ENCODE measurements at regions of chrX and their contacts with region 1.

Region 1: GRCh38 chrX:1537035-1537715 is at the start of gene P2RY8:
- DNase-seq: peak; percentile 89 to 94 (median 90)
- H3K4me3 ChIP-seq: peak within 1 kb of the TSS; percentile 62 to 99 (median 95)
- H3K4me3 Mint-ChIP-seq: peak within 1 kb of the TSS; percentile 95 to 96
- H3K27ac ChIP-seq: peak within 1 kb of the TSS; percentile 91 to 97
- H3K27ac Mint-ChIP-seq: peak within 1 kb of the TSS; percentile 94 to 100 (median 99)
- H3K4me1 ChIP-seq: peaks cover 18 to 29% of the 10 kb centered on the region in 2 donors
- H3K4me1 Mint-ChIP-seq: peaks cover 17% of the 10 kb centered on the region
- H3K27me3 ChIP-seq: no peaks in the 10 kb centered on the region
- H3K27me3 Mint-ChIP-seq: peaks cover 0 to 2% (median 0%) of the 10 kb centered on the region in 3 donors
- CTCF ChIP-seq: no peak
- polyA plus RNA-seq, gene P2RY8: 18.9 to 40.0 (median 33.3) TPM

Region 2: DNA sequence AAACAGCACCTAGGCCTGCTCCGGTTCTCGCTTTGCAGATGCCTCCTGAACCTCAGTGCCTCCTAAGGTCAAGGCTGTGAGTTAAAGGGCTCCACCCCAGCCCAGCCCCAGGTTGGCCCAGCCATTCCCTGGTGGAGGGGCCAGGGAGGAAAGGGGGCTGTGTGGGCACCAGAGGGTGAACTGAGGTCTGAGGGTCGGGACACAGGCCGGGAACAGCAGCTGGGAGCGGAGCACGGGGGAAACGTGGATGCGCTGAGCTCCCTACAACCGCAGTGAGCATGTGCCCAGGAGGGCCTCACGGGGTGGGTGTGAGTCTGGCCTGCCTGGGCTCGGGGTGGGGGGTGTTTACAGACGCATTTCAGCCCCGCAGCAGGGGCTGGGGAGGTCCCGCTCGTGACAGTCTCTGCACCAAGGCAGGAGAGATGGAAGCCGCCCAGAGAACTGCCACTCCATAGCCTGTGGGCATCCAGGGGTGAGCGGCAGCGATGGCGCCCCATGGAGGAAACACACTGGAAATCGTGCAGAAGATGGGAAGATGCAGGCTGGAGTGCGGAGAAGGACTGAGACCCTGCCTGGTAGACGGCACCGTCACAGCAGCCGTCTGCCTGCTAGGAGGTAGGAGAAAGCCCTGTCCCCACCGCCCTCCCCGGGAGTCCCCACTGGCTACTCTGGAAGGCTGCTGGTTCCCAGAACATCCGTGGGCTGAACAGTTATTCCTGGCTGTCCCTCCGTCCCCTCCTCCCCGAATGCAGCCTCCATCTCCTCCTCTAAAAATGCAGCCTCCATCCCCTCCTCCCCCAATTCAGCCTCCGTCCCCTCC is 135.4 kb before region 1 on chrX:
- intact Hi-C with region 1: no loop called
- DNase-seq: no peak
- H3K4me3 ChIP-seq: no peak overlapping the region
- H3K4me3 Mint-ChIP-seq: no peak overlapping the region
- H3K27ac ChIP-seq: no peak overlapping the region
- H3K27ac Mint-ChIP-seq: peak overlapping the region in 1 of 7 donors; percentile 5
- H3K4me1 ChIP-seq: no peaks in the 10 kb centered on the region
- H3K4me1 Mint-ChIP-seq: no peaks in the 10 kb centered on the region
- H3K27me3 ChIP-seq: no peaks in the 10 kb centered on the region
- H3K27me3 Mint-ChIP-seq: no peaks in the 10 kb centered on the region
- CTCF ChIP-seq: no peak

Region 3: DNA sequence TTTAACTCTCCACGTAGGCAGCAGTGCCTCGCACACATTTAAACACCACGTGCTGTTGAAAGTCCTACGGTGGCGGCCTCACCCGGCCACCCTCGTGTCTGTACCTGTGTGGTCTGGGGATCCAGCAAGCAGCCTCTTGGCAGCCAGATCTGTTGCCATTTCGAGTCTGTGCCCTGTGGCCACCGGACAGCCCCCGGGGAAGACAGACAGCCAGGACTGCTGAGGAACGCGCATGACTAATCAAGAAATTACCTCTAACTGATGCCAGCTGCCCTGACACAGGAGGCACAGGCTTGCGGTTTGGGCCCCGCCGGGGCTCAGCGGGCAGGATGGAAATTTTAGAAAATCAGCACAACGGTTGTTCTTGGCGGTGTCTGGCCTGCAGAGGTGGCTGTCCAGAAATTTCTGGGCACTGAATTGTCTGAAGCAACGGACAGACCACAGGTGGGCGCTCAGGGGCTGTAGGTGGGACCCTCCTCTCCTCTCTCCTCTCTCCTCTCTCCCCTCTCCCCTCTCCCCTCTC is 68.9 kb before region 1 on chrX:
- intact Hi-C with region 1: loop called (anchors 5 kb)
- DNase-seq: peak; percentile 48 to 83 (median 69)
- H3K4me3 ChIP-seq: no peak overlapping the region
- H3K4me3 Mint-ChIP-seq: peak overlapping the region in 1 of 2 donors; percentile 34
- H3K27ac ChIP-seq: peak overlapping the region; percentile 43 to 72
- H3K27ac Mint-ChIP-seq: peak overlapping the region; percentile 18 to 92 (median 68)
- H3K4me1 ChIP-seq: peaks cover 33 to 40% of the 10 kb centered on the region in 2 donors
- H3K4me1 Mint-ChIP-seq: peaks cover 53% of the 10 kb centered on the region
- H3K27me3 ChIP-seq: no peaks in the 10 kb centered on the region
- H3K27me3 Mint-ChIP-seq: peaks cover 0 to 1% (median 0%) of the 10 kb centered on the region in 3 donors
- CTCF ChIP-seq: no peak

Region 4: DNA sequence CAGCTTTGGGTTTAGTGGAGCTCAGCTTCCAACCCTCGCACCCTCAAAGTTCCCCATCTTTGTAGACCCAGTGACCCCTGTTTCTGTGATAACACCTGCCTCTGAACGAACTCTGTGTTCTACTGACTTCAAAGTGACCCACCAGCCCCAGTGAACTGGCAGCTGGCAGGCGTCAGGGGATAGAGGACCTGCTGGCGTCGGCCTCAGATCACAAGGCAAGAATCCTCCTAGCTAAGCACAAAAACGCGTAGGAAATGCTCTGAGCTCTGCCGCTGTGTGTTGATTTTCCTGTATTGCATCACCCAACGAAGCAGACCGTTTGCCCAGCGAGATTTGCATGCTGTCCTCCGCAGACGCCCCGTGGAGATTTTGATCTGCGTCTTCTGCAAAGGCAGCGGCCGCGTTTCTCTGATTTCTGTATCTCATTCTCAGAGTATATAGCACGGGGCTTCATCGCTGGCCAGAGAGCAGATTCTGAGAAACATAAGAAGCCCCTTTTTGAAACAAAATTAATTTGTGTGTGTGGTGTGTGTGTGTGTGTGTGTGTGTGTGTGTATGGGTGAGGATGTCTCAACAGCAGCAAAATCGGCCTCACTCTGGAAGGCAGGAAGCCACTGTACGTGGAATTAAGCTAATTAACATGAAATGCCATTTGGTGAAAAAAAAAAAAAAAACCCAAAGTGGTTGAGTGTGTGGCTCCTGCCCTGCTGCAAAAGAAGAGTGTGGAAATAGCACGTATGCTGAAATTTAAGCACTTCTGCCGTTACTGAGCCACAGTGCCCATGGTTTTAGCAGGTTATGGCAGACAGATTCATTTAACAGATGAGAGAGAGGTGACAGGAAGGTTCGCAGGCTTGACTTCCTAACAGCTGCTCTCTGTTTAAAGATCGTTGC is 55.3 kb before region 1 on chrX:
- intact Hi-C with region 1: loop called in 1 of 2 experiments (anchors 1 kb)
- DNase-seq: peak; percentile 84 to 90 (median 86)
- H3K4me3 ChIP-seq: peak overlapping the region; percentile 6 to 70 (median 32)
- H3K4me3 Mint-ChIP-seq: peak overlapping the region; percentile 86 to 92
- H3K27ac ChIP-seq: peak overlapping the region; percentile 87 to 93
- H3K27ac Mint-ChIP-seq: peak overlapping the region; percentile 92 to 99 (median 98)
- H3K4me1 ChIP-seq: peaks cover 58 to 59% of the 10 kb centered on the region in 2 donors
- H3K4me1 Mint-ChIP-seq: peaks cover 74% of the 10 kb centered on the region
- H3K27me3 ChIP-seq: no peaks in the 10 kb centered on the region
- H3K27me3 Mint-ChIP-seq: peaks cover 0 to 1% (median 0%) of the 10 kb centered on the region in 3 donors
- CTCF ChIP-seq: no peak

Region 5: GRCh38 chrX:1500701-1501624 is 36.2 kb before region 1 on chrX:
- intact Hi-C with region 1: loop called (anchors 1 to 2 kb)
- DNase-seq: peak in 2 of 3 donors; percentile 41 to 48
- H3K4me3 ChIP-seq: peak overlapping the region in 1 of 3 experiments; percentile 36
- H3K4me3 Mint-ChIP-seq: peak overlapping the region in 1 of 2 donors; percentile 48
- H3K27ac ChIP-seq: peak overlapping the region; percentile 62 to 79
- H3K27ac Mint-ChIP-seq: peak overlapping the region; percentile 59 to 99 (median 90)
- H3K4me1 ChIP-seq: peaks cover 51 to 53% of the 10 kb centered on the region in 2 donors
- H3K4me1 Mint-ChIP-seq: peaks cover 35% of the 10 kb centered on the region
- H3K27me3 ChIP-seq: no peaks in the 10 kb centered on the region
- H3K27me3 Mint-ChIP-seq: peaks cover 0 to 2% (median 2%) of the 10 kb centered on the region in 3 donors
- CTCF ChIP-seq: no peak